Activated CD4-positive, alpha-beta T cell treated with anti-CD3 and anti-CD28 coated beads for 36 hours (primary cell): ENCODE measurements at regions of chr4 and their contacts with region 1.

Region 1: GRCh38 chr4:742742-743311 is 37.2 kb downstream of the PCGF3 start:
- DNase-seq: peak; percentile 89
- ATAC-seq: peak; percentile 95
- H3K4me3 Mint-ChIP-seq: no peak overlapping the region
- H3K27ac Mint-ChIP-seq: no peak overlapping the region
- H3K4me1 Mint-ChIP-seq: no peaks in the 10 kb centered on the region
- H3K27me3 Mint-ChIP-seq: no peaks in the 10 kb centered on the region

Region 2: DNA sequence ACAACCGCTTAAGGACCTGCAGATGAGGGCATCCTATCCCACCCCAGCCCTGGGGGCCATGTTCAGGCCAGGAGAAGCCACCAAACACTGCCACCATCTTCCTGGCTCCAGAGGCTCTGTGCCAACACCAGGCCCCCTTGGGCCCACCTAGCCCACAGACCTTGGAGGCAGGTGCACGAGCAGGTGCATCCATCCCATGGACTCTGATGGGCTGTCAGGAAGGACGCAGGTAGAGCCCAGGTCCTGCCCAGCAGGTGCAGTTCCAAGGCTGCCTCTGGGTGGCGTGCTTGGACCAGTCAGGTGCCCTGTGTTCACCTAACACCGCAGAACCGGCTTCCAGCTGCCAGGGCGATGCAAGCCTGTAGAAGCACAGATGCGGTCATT is 140.3 kb before region 1 on chr4:
- CTCF ChIA-PET with region 1: no interaction called
- POLR2A ChIA-PET with region 1: no interaction called
- intact Hi-C with region 1: loop called in 1 of 2 experiments (anchors 2 kb)
- DNase-seq: peak; percentile 90
- ATAC-seq: peak; percentile 69
- H3K4me3 Mint-ChIP-seq: no peak overlapping the region
- H3K27ac Mint-ChIP-seq: no peak overlapping the region
- H3K4me1 Mint-ChIP-seq: peaks cover 19% of the 10 kb centered on the region
- H3K27me3 Mint-ChIP-seq: peaks cover 11% of the 10 kb centered on the region

Region 3: GRCh38 chr4:673349-674091 is 69.3 kb before region 1 on chr4:
- CTCF ChIA-PET with region 1: no interaction called
- POLR2A ChIA-PET with region 1: no interaction called
- intact Hi-C with region 1: no loop called
- DNase-seq: peak; percentile 38
- ATAC-seq: no peak
- H3K4me3 Mint-ChIP-seq: peak overlapping the region; percentile 80
- H3K27ac Mint-ChIP-seq: peak overlapping the region; percentile 78
- H3K4me1 Mint-ChIP-seq: peaks cover 13% of the 10 kb centered on the region
- H3K27me3 Mint-ChIP-seq: no peaks in the 10 kb centered on the region

Region 4: DNA sequence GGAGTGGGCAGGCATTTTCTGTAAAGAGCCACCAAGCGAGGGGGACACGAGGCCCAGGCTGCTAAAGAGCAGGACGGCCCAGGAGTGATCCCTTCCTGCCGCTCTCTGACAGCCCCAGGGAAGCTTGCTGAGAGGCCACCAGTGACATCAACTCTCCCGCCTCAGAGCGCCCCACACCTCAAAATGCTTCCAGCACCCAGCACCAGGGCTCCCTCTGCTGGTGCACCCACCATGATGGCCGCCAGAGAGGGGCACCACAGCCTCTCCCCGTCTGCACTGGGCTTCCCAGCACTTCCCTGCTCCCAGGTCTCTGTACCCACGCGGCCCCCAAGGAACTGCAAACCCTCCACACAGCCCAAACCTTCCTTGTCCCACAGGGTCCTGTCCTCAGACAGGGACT is 148.9 kb after region 1 on chr4:
- CTCF ChIA-PET with region 1: interaction called, 11 read pairs
- POLR2A ChIA-PET with region 1: no interaction called
- intact Hi-C with region 1: loop called in 1 of 2 experiments (anchors 2 kb)
- DNase-seq: peak; percentile 63
- ATAC-seq: peak; percentile 42
- H3K4me3 Mint-ChIP-seq: no peak overlapping the region
- H3K27ac Mint-ChIP-seq: no peak overlapping the region
- H3K4me1 Mint-ChIP-seq: no peaks in the 10 kb centered on the region
- H3K27me3 Mint-ChIP-seq: no peaks in the 10 kb centered on the region